Sigmoid colon (tissue), 7 donors: ENCODE measurements at regions of chr2 and their contacts with region 1.

Region 1: DNA sequence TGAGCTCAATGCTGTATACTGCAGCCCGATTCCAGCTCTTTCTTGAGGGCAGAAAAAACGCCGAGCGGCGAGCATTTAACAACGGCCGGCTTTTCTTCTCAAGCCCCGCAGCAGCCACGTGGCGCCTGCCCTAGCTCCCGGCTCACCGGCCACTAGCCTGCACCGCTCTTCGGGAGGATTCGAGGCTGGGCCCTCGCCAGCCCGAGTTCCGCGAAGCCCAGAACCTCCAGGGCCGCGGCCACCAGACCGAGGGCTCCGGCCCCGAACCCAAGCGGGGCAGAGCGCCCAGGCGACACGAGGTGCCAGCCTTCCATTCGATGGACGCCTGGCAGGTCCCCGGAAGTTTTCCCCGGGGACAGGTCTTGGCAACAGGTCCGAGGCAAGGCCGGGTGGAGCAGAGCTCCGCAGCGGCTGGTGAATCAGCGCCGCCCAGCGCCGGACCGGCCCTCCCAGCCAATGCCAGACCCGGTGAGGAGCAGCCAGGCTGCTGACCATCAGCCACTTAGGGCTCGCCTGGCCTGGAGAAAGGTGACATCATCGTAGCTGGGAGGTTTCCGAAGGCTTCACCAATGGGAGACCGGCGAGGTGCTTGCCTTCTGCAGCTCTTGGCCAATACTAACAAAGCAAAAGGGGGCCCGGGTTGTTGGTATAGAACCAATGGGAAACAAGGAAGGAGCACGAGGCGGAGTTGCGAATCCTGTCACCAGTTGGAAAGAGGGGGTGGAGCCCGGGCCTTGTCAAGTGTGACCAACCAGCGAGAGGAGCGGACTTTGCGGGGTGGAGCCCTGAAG is 544 bp upstream of the MXD1 start:
- DNase-seq: peak; percentile 100
- H3K4me3 ChIP-seq: peak overlapping the region; percentile 48 to 94 (median 90)
- H3K27ac ChIP-seq: peak overlapping the region; percentile 96 to 98 (median 98)
- H3K4me1 ChIP-seq: peaks cover 0 to 43% (median 22%) of the 10 kb centered on the region in 4 donors
- H3K27me3 ChIP-seq: no peaks in the 10 kb centered on the region
- CTCF ChIP-seq: no peak
- EP300 ChIP-seq: peak in 1 of 4 donors; percentile 1
- POLR2A ChIP-seq: peak; percentile 89 to 90

Region 2: GRCh38 chr2:70070541-70071268 is 156.3 kb after region 1 on chr2:
- intact Hi-C with region 1: loop called (anchors 5 kb)
- DNase-seq: peak; percentile 89
- H3K4me3 ChIP-seq: no peak overlapping the region
- H3K27ac ChIP-seq: peak overlapping the region; percentile 77 to 79 (median 78)
- H3K4me1 ChIP-seq: peaks cover 0 to 22% (median 18%) of the 10 kb centered on the region in 4 donors
- H3K27me3 ChIP-seq: no peaks in the 10 kb centered on the region
- CTCF ChIP-seq: peak; percentile 64 to 94 (median 80)
- EP300 ChIP-seq: no peak
- POLR2A ChIP-seq: no peak

Region 3: GRCh38 chr2:70142590-70143313 is 228.4 kb after region 1 on chr2:
- intact Hi-C with region 1: loop called (anchors 1 kb)
- DNase-seq: peak; percentile 100
- H3K4me3 ChIP-seq: peak overlapping the region; percentile 56 to 78 (median 72)
- H3K27ac ChIP-seq: peak overlapping the region; percentile 97 to 100 (median 99)
- H3K4me1 ChIP-seq: peaks cover 0 to 24% (median 20%) of the 10 kb centered on the region in 4 donors
- H3K27me3 ChIP-seq: no peaks in the 10 kb centered on the region
- CTCF ChIP-seq: peak; percentile 85 to 100 (median 98)
- EP300 ChIP-seq: peak in 3 of 4 donors; percentile 52 to 95 (median 74)
- POLR2A ChIP-seq: peak; percentile 92 to 94

Region 4: DNA sequence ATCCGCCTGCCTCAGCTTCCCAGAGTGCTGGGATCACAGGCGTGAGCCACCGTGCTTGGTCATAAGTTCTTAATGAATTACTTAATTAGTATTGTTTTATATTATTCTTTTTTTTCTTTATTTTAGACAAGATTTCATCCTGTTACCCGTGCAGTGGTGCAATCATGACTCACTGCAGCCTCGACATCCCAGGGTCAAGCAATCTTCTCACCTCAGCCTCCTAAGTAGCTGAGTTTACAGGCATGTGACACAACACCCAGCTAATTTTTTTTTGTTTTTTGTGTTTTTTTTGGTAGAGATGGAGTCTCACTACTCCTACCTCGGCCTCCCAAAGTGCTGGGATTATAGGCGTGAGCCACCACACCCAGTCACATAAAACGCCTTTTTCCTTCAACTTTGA is 259.2 kb after region 1 on chr2:
- intact Hi-C with region 1: no loop called
- DNase-seq: no peak
- H3K4me3 ChIP-seq: no peak overlapping the region
- H3K27ac ChIP-seq: no peak overlapping the region
- H3K4me1 ChIP-seq: no peaks in the 10 kb centered on the region
- H3K27me3 ChIP-seq: no peaks in the 10 kb centered on the region
- CTCF ChIP-seq: no peak
- EP300 ChIP-seq: no peak
- POLR2A ChIP-seq: no peak

Region 5: DNA sequence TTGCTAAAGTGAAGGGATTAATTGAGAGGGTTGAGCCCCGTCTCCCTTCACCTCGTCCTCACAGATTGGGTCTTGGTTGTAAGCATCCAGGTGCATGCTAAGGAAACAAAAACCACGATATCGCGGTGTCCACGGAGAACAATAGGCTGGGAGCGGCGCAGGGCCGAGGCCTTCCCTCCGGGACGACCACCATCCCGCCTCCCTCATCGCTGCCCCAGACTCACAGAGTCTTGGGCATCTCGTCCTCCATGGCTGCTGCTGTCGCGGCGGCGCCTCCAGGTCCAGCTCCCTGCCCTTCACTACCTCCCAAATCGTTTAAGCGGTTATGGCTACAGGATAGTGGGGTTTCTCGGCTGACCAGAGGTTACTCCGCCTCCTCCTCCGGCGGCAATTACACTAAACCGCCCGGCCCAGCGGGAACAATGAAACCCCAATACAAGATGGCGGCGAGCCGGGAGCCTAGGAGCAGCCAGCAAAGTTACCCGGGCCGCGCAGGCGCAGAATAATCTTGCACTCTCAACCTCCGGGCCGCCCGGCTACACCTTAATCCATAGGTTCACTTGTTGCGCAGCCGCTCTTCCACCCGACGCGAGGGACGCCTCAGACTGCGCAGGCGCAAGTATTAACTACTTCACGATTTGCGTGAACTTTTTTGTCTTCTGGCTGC is 333.9 kb after region 1 on chr2 and contains the start of gene TIA1:
- intact Hi-C with region 1: loop called (anchors 5 kb)
- DNase-seq: peak; percentile 99
- H3K4me3 ChIP-seq: peak within 1 kb of the TSS; percentile 65 to 93 (median 77)
- H3K27ac ChIP-seq: peak within 1 kb of the TSS; percentile 93 to 97 (median 95)
- H3K4me1 ChIP-seq: peaks cover 0 to 39% (median 37%) of the 10 kb centered on the region in 4 donors
- H3K27me3 ChIP-seq: no peaks in the 10 kb centered on the region
- CTCF ChIP-seq: no peak
- EP300 ChIP-seq: no peak
- POLR2A ChIP-seq: peak; percentile 66 to 75
- total RNA-seq, gene TIA1: 94.8 to 132 (median 105) TPM

Region 6: DNA sequence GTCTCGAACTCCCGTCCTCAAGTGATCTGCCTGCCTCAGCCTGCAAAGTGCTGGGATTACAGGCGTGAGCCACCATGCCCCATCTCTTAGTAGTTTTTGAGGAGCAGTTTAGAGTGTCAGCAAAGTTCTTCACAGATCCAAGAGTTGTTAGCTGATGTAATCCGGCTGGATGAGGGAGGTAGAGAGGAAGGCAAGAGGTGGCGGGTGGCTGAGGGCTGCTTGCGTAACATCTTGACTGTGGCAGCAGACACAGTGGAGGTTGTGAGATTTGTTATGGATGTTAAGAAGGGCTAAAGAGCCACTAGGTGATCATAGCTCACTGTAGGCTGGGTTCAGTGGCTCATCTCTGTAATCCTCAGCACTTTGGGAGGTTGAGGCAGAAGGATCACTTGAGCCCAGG is 407.0 kb after region 1 on chr2:
- intact Hi-C with region 1: no loop called
- DNase-seq: no peak
- H3K4me3 ChIP-seq: no peak overlapping the region
- H3K27ac ChIP-seq: no peak overlapping the region
- H3K4me1 ChIP-seq: no peaks in the 10 kb centered on the region
- H3K27me3 ChIP-seq: no peaks in the 10 kb centered on the region
- CTCF ChIP-seq: no peak
- EP300 ChIP-seq: no peak
- POLR2A ChIP-seq: no peak